PC-9 (cell line): ENCODE measurements at regions of chr9 and their contacts with region 1.

Region 1: DNA sequence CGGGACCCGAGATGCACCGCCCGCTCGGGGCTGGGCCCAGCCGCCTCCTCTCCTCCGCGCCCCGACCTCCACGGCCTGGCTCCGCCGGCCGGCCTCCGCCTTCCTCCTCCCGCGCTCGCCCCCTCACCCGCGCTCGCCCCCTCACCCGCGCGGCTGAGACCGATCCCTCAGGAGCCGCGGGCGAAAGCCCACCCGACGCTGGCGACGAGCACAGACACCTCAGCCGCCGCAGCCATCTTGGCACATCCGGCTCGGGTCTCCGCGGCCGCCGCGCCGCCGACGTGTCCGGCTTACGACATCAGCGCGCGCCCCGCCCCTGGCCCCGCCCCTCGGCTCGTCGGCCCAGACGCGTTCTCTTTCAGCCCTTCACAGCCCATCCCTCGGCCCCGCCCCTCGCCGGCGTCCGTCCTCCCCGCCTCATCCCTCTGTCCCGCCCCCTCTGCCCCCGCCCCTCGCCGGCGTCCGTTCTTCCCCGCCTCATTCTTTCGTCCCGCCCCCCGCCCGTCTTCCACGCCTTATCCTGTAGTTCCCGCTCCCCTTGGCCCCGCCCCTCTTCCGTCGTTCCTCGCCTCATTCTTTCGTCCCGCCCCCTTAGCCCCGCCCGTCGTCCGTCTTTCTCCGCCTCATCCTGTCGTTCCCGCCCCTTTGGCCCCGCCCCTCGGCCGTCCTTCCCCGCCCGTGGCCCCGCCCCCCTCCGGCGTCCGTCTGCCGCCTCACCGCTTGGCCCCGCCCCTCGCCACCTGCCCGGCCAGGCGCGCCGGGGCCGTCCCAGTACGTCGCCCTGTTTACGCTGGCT is at the start of gene SEC16A:
- DNase-seq: peak; percentile 80 to 99
- H3K4me3 ChIP-seq: peak within 1 kb of the TSS; percentile 96
- H3K27ac ChIP-seq: peak within 1 kb of the TSS; percentile 97
- H3K4me1 ChIP-seq: peaks cover 15% of the 10 kb centered on the region
- H3K27me3 ChIP-seq: no peaks in the 10 kb centered on the region
- CTCF ChIP-seq: no peak
- total RNA-seq, gene SEC16A: 81.8 and 90.1 TPM in 2 replicates

Region 2: GRCh38 chr9:135662758-135663450 is 820.1 kb before region 1 on chr9 and contains the start of gene LCN9:
- CTCF ChIA-PET with region 1: no interaction called
- POLR2A ChIA-PET with region 1: no interaction called
- intact Hi-C with region 1: no loop called
- DNase-seq: no peak
- H3K4me3 ChIP-seq: no peak within 1 kb of the TSS
- H3K27ac ChIP-seq: no peak within 1 kb of the TSS
- H3K4me1 ChIP-seq: no peaks in the 10 kb centered on the region
- H3K27me3 ChIP-seq: peaks cover 95% of the 10 kb centered on the region
- CTCF ChIP-seq: no peak
- total RNA-seq, gene LCN9: not detected in 2 replicates

Region 3: DNA sequence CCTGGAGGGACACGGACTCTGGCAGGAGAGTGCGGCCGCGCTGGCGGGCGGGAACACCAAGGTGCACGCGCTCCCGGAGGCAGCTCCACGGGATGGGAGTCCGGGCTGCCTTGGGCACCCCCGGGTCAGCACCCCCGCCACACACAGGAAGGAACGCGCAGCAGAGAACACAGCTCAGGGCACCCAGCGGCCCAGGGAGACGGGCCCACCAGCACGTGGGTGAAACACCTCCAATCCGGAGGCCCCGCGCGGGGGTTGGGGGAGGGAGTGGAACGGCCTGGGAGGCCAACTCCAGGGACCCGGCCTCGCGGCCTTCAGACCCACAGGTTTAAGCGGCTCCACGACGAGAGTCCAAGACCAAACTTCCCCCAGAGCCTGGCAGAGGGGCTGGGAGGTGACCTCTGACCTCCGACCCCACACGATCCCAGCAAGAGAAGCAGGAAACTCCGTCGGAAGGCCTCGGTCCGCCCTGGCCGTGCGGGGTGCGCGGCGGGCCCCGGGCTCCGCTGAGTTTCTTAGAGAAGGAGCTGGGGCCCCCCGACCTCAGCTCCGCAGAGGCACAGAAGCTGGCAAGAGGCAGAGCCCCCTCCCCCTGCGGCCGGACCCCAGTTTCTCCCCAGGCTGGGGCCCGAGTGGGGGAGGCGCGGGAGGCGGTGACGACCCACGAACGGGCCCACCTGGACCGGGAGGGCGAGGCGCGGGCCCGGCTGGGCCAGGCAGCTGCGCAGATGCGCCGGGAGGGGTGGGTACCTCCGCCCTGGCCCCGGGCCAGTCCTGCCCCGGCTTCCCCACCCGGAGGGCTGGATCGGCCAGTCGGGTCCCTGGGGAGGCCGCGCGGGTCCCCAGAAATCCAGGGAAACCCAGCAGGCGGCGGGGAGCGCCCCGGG is 388.8 kb before region 1 on chr9:
- CTCF ChIA-PET with region 1: interaction called, 12 read pairs
- POLR2A ChIA-PET with region 1: no interaction called
- intact Hi-C with region 1: no loop called
- DNase-seq: peak in 1 of 2 experiments; percentile 76
- H3K4me3 ChIP-seq: peak overlapping the region; percentile 88
- H3K27ac ChIP-seq: no peak overlapping the region
- H3K4me1 ChIP-seq: peaks cover 22% of the 10 kb centered on the region
- H3K27me3 ChIP-seq: no peaks in the 10 kb centered on the region
- CTCF ChIP-seq: no peak

Region 4: DNA sequence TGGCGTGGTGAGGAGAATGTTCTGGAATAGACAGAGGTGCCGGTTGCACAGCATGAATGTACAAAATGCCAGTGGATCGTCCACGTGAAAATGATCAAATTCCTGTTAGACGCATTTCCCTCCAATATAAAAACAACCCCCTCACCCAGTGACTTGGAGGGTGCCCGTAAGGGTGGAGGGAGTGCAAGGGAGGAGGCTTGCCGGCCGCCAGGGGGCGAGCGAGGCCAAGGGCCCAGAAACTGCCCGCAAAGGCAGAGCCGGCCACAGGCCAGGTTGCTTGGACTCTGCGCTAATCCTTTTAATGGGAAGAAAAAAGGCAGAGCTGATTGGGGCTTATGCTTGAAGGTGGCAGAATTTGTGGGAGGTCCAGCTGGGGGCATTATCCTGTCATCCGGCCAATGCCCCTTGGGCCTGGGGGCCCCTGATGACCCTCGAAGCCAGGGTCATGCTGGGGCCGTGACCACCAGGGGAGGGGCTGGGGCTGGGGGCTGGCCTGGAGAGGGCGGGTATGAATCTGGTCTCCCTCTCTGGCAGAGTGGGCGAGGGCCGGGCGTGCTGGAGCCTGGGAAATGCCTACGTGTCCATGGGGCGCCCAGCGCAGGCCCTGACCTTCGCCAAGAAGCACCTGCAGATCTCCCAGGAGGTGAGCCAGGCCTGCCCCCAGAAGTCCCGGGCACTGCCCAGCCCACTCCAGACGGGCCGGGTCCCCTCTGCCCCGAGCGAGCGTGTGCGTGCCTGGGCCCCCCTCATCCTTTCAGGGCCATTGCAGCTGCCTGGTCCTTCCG is 143.6 kb before region 1 on chr9:
- CTCF ChIA-PET with region 1: no interaction called
- POLR2A ChIA-PET with region 1: no interaction called
- intact Hi-C with region 1: loop called (anchors 10 kb)
- DNase-seq: peak; percentile 56 to 85
- H3K4me3 ChIP-seq: no peak overlapping the region
- H3K27ac ChIP-seq: no peak overlapping the region
- H3K4me1 ChIP-seq: no peaks in the 10 kb centered on the region
- H3K27me3 ChIP-seq: no peaks in the 10 kb centered on the region
- CTCF ChIP-seq: peak; percentile 97

Region 5: GRCh38 chr9:136385015-136385414 is 98.0 kb before region 1 on chr9:
- CTCF ChIA-PET with region 1: no interaction called
- POLR2A ChIA-PET with region 1: no interaction called
- intact Hi-C with region 1: no loop called
- DNase-seq: no peak
- H3K4me3 ChIP-seq: no peak overlapping the region
- H3K27ac ChIP-seq: no peak overlapping the region
- H3K4me1 ChIP-seq: no peaks in the 10 kb centered on the region
- H3K27me3 ChIP-seq: no peaks in the 10 kb centered on the region
- CTCF ChIP-seq: no peak

Region 6: GRCh38 chr9:136665704-136666371 is 182.8 kb after region 1 on chr9:
- CTCF ChIA-PET with region 1: interaction called, 10 read pairs
- POLR2A ChIA-PET with region 1: no interaction called
- intact Hi-C with region 1: no loop called
- DNase-seq: peak in 1 of 2 experiments; percentile 48
- H3K4me3 ChIP-seq: peak overlapping the region; percentile 48; the same call in 1 of the 2 replicates
- H3K27ac ChIP-seq: no peak overlapping the region
- H3K4me1 ChIP-seq: no peaks in the 10 kb centered on the region
- H3K27me3 ChIP-seq: no peaks in the 10 kb centered on the region
- CTCF ChIP-seq: no peak

Region 7: DNA sequence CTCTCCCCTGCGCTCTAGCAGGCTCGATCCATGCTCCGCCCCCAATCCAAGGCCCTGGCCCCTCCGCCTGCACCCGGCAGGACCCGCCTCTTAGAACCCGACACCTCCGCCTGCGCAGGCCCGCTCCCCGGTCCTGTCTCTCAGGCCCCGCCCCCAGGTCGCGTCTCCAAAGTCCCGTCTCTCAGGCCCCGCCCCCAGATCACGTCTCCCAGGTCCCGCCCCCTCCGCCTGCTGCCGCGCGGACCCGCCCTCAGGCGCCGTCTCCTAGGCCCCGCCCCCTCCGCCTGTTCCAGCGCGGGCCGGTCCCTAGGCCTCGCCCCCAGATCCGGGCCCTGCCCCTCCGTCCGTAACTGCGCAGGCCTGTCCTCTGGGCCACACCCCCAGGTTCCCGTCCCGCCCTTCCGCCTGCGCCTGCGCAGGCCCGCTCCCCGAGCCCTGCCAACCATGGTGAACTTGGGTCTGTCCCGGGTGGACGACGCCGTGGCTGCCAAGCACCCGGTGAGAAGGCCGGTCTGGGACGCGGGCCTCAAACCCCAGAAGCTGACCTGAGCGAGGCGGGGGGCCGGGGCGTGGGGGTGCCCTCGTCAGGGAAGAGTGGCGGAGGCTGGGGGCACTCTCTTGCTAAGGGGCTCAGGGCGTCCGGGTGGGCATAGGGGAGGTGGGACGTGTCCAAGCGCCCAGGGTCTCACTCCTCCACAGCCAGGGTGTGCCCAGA is 308.1 kb after region 1 on chr9 and contains the start of gene TMEM141:
- CTCF ChIA-PET with region 1: no interaction called
- POLR2A ChIA-PET with region 1: no interaction called
- intact Hi-C with region 1: loop called (anchors 10 kb)
- DNase-seq: peak; percentile 94 to 100
- H3K4me3 ChIP-seq: peak within 1 kb of the TSS; percentile 68
- H3K27ac ChIP-seq: peak within 1 kb of the TSS; percentile 79
- H3K4me1 ChIP-seq: peaks cover 15% of the 10 kb centered on the region; the same call in 1 of the 2 replicates
- H3K27me3 ChIP-seq: no peaks in the 10 kb centered on the region
- CTCF ChIP-seq: no peak
- total RNA-seq, gene TMEM141: 83.6 and 124 TPM in 2 replicates